GM10248 (cell line): ENCODE measurements at regions of chr1 and their contacts with region 1.

Region 1: DNA sequence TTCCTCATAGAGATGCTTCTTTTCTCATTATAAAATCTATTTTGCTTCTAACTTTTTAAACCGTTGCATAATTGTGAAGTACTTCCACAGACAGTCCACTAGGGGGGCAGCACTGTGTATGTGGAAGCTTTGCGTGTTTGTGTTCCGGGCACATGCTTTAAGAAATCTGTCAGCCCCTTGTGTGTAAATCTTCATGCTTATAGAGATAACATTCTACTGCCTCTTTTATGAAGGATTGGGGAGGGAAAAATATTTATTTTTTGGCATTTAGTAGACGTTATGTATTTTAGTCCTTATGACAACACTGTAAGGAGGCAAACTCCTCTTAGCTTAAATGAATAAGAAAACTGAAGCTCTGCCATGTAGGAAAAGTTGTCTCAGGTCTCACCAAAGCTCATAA is 157.3 kb upstream of the PTGFR start:
- DNase-seq: no peak
- CTCF ChIP-seq: peak; percentile 62

Region 2: DNA sequence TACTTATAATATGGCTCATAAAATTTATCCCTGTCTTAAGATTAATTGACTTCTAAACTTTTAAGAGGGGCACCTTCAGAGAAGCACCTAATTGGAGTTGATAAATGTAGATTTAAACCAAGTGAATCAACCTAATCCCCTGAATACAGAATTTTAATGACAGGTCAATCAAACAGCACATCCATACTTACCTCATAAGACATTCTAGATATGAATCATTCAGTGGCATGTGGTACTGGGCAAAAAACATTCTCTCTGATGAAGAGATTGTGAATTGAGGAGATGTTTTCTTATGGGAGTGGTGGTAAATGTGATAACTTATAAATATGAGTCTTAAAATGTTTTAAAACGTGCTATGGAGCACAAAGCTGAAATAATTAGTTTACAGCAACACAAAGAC is 10.2 kb before region 1 on chr1:
- CTCF ChIA-PET with region 1: interaction called, 25 read pairs
- POLR2A ChIA-PET with region 1: no interaction called
- DNase-seq: no peak
- CTCF ChIP-seq: no peak

Region 3: GRCh38 chr1:78355656-78356055 is 22.2 kb after region 1 on chr1:
- CTCF ChIA-PET with region 1: interaction called, 13 read pairs
- POLR2A ChIA-PET with region 1: no interaction called
- DNase-seq: no peak
- CTCF ChIP-seq: no peak